ENCODE measurements at regions of chr12 and their contacts with region 1.

Region 1: DNA sequence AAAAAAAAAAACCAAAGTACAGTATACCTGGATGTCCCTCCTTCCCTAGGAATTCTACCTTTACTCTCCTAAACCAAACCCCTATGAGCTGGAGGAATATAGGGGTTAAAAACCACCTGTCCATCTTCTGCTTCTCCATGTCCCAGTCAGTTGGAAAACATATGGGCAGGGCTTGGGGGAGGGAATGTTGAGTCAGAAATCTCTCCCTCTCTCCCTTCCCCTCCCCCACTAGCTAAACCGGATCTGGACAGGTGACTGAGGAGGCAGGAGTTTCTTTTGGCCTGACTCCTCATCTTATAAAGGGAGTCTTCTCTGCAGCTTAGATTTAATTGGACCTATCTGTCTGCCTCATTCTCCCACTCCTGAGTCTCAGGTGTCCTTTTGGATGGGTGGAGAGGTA is 6.1 kb downstream of the ERBB3 start:
- DNase-seq: no peak
- ATAC-seq: no peak
- H3K4me3 Mint-ChIP-seq: no peak overlapping the region
- H3K27ac Mint-ChIP-seq: no peak overlapping the region
- H3K4me1 Mint-ChIP-seq: no peaks in the 10 kb centered on the region
- H3K27me3 Mint-ChIP-seq: peaks cover 14% of the 10 kb centered on the region
- CTCF ChIP-seq: no peak

Region 2: DNA sequence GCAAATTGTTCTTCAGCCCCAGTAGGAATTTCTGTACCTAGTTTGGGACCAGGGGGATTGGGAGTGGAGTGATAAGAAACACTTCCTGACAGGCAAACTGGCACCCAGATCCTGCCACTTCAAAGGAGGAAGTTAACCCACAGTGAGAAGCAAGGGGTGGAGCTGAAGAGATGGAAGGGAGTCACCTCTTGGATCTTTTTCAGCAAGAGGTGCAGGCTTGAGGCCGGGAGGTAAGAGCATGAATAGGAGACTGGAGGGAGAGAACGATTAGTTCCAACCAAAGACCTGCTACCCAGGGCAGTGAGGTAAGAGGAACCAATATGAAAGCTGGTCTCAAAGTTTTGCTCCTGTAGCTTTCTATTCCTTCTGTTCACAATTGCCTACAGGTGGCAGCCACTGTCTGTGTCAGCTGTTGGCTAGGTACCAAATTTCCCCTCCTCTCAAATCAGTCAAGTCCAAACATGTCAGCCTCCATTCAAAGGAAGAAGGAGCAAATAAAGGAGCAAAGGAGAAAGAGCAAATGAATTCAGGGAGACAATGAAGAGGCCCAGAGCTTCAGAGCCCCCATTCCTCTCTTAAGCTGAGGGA is 945.2 kb after region 1 on chr12:
- CTCF ChIA-PET with region 1: no interaction called
- POLR2A ChIA-PET with region 1: interaction called, 10 read pairs
- intact Hi-C with region 1: no loop called
- DNase-seq: no peak
- ATAC-seq: peak; percentile 69
- H3K4me3 Mint-ChIP-seq: no peak overlapping the region
- H3K27ac Mint-ChIP-seq: peak overlapping the region; percentile 72
- H3K4me1 Mint-ChIP-seq: peaks cover 14% of the 10 kb centered on the region
- H3K27me3 Mint-ChIP-seq: no peaks in the 10 kb centered on the region
- CTCF ChIP-seq: no peak